Transverse colon (tissue), 4 donors: ENCODE measurements at regions of chr19 and their contacts with region 1.

Region 1: GRCh38 chr19:14198384-14199376 is 7.3 kb downstream of the ADGRL1 start:
- DNase-seq: no peak
- H3K4me3 ChIP-seq: no peak overlapping the region
- H3K27ac ChIP-seq: no peak overlapping the region
- H3K4me1 ChIP-seq: peaks cover 0 to 30% (median 13%) of the 10 kb centered on the region in 4 donors
- H3K27me3 ChIP-seq: no peaks in the 10 kb centered on the region
- CTCF ChIP-seq: no peak
- EP300 ChIP-seq: no peak
- POLR2A ChIP-seq: no peak

Region 2: GRCh38 chr19:13905938-13906904 is 292.5 kb before region 1 on chr19 and contains the starts of genes BRME1 and CC2D1A:
- in situ Hi-C with region 1: no loop called
- intact Hi-C with region 1: no loop called
- DNase-seq: peak; percentile 96
- H3K4me3 ChIP-seq: peak within 1 kb of the TSS; percentile 67 to 93 (median 81)
- H3K27ac ChIP-seq: peak within 1 kb of the TSS; percentile 87 to 96 (median 92)
- H3K4me1 ChIP-seq: peaks cover 6 to 41% (median 31%) of the 10 kb centered on the region in 4 donors
- H3K27me3 ChIP-seq: no peaks in the 10 kb centered on the region
- CTCF ChIP-seq: peak in 1 of 5 experiments; percentile 23
- EP300 ChIP-seq: no peak
- POLR2A ChIP-seq: peak; percentile 86
- total RNA-seq, gene BRME1: 5.2 to 102 (median 6.7) TPM
- total RNA-seq, gene CC2D1A: 113 to 294 (median 177) TPM

Region 3: GRCh38 chr19:14136509-14137281 is 62.0 kb before region 1 on chr19 and contains the start of gene ASF1B:
- in situ Hi-C with region 1: no loop called
- intact Hi-C with region 1: no loop called
- DNase-seq: peak; percentile 98
- H3K4me3 ChIP-seq: peak within 1 kb of the TSS; percentile 50 to 76 (median 58)
- H3K27ac ChIP-seq: peak within 1 kb of the TSS; percentile 94 to 96 (median 94)
- H3K4me1 ChIP-seq: peaks cover 14 to 27% (median 22%) of the 10 kb centered on the region in 4 donors
- H3K27me3 ChIP-seq: no peaks in the 10 kb centered on the region
- CTCF ChIP-seq: peak; percentile 62 to 93 (median 79)
- EP300 ChIP-seq: no peak
- POLR2A ChIP-seq: peak; percentile 84
- total RNA-seq, gene ASF1B: 1.9 to 4.5 (median 4.4) TPM in 3 of 4 donors, not detected in the other

Region 4: GRCh38 chr19:14147797-14148605 is 50.7 kb before region 1 on chr19:
- in situ Hi-C with region 1: no loop called
- intact Hi-C with region 1: no loop called
- DNase-seq: peak; percentile 71
- H3K4me3 ChIP-seq: no peak overlapping the region
- H3K27ac ChIP-seq: peak overlapping the region; percentile 68 to 84 (median 77)
- H3K4me1 ChIP-seq: peaks cover 19 to 31% (median 26%) of the 10 kb centered on the region in 4 donors
- H3K27me3 ChIP-seq: no peaks in the 10 kb centered on the region
- CTCF ChIP-seq: peak; percentile 76 to 88 (median 82)
- EP300 ChIP-seq: no peak
- POLR2A ChIP-seq: no peak

Region 5: GRCh38 chr19:14300303-14300702 is 101.6 kb after region 1 on chr19:
- in situ Hi-C with region 1: no loop called
- intact Hi-C with region 1: loop called (anchors 10 kb)
- DNase-seq: peak; percentile 10
- H3K4me3 ChIP-seq: no peak overlapping the region
- H3K27ac ChIP-seq: no peak overlapping the region
- H3K4me1 ChIP-seq: no peaks in the 10 kb centered on the region
- H3K27me3 ChIP-seq: peaks cover 3% of the 10 kb centered on the region
- CTCF ChIP-seq: no peak
- EP300 ChIP-seq: no peak
- POLR2A ChIP-seq: no peak

Region 6: GRCh38 chr19:14347999-14348889 is 149.6 kb after region 1 on chr19:
- in situ Hi-C with region 1: loop called in 3 of 4 experiments (anchors 5 to 25 kb)
- intact Hi-C with region 1: no loop called
- DNase-seq: peak; percentile 77
- H3K4me3 ChIP-seq: peak overlapping the region in 2 of 4 donors; percentile 26 to 34
- H3K27ac ChIP-seq: peak overlapping the region in 2 of 4 donors; percentile 2 to 13
- H3K4me1 ChIP-seq: peaks cover 0 to 17% (median 12%) of the 10 kb centered on the region in 4 donors
- H3K27me3 ChIP-seq: no peaks in the 10 kb centered on the region
- CTCF ChIP-seq: peak; percentile 96 to 99 (median 97)
- EP300 ChIP-seq: no peak
- POLR2A ChIP-seq: no peak

Region 7: DNA sequence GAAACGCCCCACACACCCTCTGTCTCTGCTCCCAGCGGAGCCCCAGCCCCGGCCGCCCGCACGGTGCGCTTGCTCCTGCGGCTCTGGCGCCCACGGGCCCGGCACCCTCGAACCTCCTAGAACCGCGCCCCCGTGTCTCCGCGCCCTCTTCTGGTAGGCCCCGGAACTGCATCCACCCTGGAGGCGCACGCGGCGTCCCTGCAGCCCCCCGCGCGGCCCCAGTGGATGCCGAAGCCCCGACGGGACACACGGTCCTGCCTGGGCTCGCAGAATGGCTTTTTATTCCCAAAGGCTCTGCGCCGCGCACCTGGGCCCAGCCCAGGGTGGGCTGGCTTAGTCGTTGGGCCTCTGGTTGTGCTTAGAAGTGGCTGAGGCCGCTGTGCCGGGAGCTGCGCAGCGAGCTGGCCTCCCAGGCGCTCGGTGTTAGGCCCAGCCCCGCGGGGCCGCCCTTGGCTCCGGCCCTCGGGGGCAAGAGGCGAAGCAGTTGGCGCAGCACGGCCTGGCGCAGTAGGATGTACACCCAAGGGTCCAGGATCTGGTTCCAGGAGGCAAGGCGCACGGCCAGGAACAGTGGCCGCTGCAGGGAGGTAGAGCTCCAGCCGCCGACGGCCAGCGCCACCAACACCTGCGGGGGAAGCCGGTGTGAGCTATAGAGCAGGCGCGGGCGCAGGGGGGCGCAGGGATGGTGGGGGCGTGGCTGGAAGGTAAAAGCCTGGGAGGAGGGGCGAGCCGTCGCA is 273.7 kb after region 1 on chr19:
- in situ Hi-C with region 1: loop called in 1 of 4 experiments (anchors 25 kb)
- intact Hi-C with region 1: no loop called
- DNase-seq: peak; percentile 76
- H3K4me3 ChIP-seq: peak overlapping the region in 2 of 4 donors; percentile 25 to 38
- H3K27ac ChIP-seq: no peak overlapping the region
- H3K4me1 ChIP-seq: peaks cover 19 to 38% (median 34%) of the 10 kb centered on the region in 4 donors
- H3K27me3 ChIP-seq: peaks cover 34% of the 10 kb centered on the region
- CTCF ChIP-seq: peak; percentile 96 to 100 (median 99)
- EP300 ChIP-seq: no peak
- POLR2A ChIP-seq: no peak